Uterus (tissue), 4 donors: ENCODE measurements at regions of chr4 and their contacts with region 1.

Region 1: DNA sequence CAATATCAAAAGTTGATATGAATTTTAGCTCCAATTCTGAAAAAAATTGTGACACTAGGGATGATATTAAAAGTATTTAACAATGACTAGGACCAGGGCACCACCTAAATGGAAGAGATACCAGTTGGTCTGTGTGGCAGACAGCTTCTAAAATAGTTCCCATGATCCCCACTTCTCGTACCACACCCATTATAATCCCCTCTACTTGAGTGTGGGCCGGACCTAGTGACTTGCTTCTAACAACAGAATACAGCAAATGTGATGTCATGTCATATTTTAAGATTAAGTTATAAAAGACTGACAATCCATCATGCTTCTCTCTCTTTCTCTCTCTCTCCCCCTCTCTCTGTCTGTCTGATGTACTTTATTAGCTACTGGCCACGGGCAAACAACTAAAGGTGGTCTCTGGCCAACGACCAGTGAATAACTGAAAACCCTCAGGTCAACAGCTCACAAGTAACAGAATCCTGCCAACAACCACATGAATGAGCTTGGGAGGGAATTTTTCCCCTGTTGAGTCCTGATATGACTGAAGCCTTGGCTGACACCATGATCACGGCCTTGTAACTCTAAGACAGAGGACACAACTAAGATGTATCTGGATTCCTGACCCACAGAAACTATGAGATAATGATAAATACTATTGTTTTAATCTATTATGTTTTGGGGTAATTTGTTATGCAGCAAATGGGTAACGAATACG is 34.4 kb downstream of the FAM13A start:
- DNase-seq: no peak
- H3K4me3 ChIP-seq: no peak overlapping the region
- H3K27ac ChIP-seq: no peak overlapping the region
- H3K4me1 ChIP-seq: no peaks in the 10 kb centered on the region
- H3K27me3 ChIP-seq: no peaks in the 10 kb centered on the region
- CTCF ChIP-seq: no peak
- POLR2A ChIP-seq: no peak

Region 2: DNA sequence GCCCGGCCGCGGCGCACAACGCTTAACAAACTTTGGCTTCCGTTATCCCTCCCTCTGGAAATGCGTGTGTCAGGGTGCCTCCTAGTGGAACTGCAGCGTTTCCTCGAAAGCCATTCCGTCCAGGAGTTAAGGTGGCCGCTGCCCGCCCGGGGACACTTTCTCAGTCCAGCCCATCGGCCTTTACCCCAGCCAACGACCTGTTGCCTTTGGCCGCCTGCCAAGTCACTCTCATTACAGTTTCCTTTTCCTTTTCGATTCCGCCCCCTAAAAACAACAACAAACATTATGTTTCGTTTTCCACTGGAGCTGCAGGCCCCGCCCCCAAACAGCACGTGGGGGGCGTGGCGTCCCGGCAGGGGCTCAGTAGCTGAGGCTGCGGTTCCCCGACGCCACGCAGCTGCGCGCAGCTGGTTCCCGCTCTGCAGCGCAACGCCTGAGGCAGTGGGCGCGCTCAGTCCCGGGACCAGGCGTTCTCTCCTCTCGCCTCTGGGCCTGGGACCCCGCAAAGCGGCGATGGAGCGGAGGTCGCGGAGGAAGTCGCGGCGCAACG is 565.7 kb before region 1 on chr4 and contains the start of gene HERC5:
- intact Hi-C with region 1: no loop called
- DNase-seq: peak; percentile 90 to 93
- H3K4me3 ChIP-seq: peak within 1 kb of the TSS; percentile 52 to 79
- H3K27ac ChIP-seq: peak within 1 kb of the TSS; percentile 89 to 96
- H3K4me1 ChIP-seq: no peaks in the 10 kb centered on the region
- H3K27me3 ChIP-seq: no peaks in the 10 kb centered on the region
- CTCF ChIP-seq: peak; percentile 70 to 85 (median 79)
- POLR2A ChIP-seq: peak; percentile 80 to 81
- total RNA-seq, gene HERC5: 4.3 to 23.7 (median 10.6) TPM

Region 3: GRCh38 chr4:88659055-88659889 is 363.3 kb before region 1 on chr4:
- intact Hi-C with region 1: no loop called
- DNase-seq: peak; percentile 39 to 54
- H3K4me3 ChIP-seq: no peak overlapping the region
- H3K27ac ChIP-seq: peak overlapping the region; percentile 21 to 48
- H3K4me1 ChIP-seq: no peaks in the 10 kb centered on the region
- H3K27me3 ChIP-seq: no peaks in the 10 kb centered on the region
- CTCF ChIP-seq: peak; percentile 66 to 78 (median 70)
- POLR2A ChIP-seq: no peak

Region 4: DNA sequence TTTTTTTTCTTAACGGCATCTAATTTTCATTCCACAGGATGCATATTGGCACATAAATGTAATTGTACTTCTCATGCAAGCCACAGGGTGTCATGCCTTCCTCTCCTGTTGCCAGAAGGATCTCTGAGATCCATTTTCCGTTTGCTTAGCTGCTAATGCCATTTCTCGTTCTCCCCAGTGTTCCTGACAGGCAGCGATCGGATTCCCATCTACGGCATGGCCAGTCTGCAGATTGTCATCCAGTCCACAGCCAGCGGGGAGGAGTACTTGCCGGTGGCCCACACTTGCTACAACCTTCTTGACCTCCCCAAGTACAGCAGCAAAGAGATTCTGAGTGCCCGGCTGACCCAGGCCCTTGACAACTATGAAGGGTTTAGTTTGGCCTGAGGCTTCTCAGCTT is 316.0 kb before region 1 on chr4:
- intact Hi-C with region 1: loop called (anchors 2 kb)
- DNase-seq: peak; percentile 32 to 41
- H3K4me3 ChIP-seq: no peak overlapping the region
- H3K27ac ChIP-seq: peak overlapping the region; percentile 10 to 29
- H3K4me1 ChIP-seq: no peaks in the 10 kb centered on the region
- H3K27me3 ChIP-seq: no peaks in the 10 kb centered on the region
- CTCF ChIP-seq: peak; percentile 49 to 68 (median 56)
- POLR2A ChIP-seq: no peak

Region 5: DNA sequence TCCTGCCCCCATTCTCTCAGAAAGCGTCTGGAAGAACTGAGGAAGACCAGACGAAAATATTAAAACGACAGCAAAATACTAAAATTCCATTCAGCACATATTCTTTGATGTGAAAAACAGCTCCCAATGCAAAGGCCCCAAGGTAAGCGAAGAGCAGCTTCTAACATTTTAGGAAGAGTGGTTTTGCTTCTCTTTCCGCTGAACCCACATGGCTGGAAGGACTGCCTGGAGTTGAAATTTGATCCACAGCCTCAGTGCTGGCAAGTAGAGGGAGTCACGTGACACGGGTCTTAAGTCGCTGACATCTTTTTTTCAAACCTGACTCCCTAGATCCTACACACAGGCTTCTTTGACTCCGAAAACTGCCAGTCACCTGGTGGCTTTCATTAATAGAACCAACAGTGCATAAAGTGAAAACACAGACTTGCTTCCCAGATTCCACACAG is 34.4 kb after region 1 on chr4 and contains the start of gene FAM13A:
- intact Hi-C with region 1: no loop called
- DNase-seq: peak; percentile 80 to 92
- H3K4me3 ChIP-seq: peak within 1 kb of the TSS; percentile 43 to 44
- H3K27ac ChIP-seq: peak within 1 kb of the TSS; percentile 75 to 88
- H3K4me1 ChIP-seq: peaks cover 0 to 16% of the 10 kb centered on the region in 2 donors
- H3K27me3 ChIP-seq: no peaks in the 10 kb centered on the region
- CTCF ChIP-seq: peak in 1 of 4 experiments; percentile 3
- POLR2A ChIP-seq: peak in 1 of 2 donors; percentile 25
- total RNA-seq, gene FAM13A: 17.7 to 80.3 (median 46.2) TPM

Region 6: DNA sequence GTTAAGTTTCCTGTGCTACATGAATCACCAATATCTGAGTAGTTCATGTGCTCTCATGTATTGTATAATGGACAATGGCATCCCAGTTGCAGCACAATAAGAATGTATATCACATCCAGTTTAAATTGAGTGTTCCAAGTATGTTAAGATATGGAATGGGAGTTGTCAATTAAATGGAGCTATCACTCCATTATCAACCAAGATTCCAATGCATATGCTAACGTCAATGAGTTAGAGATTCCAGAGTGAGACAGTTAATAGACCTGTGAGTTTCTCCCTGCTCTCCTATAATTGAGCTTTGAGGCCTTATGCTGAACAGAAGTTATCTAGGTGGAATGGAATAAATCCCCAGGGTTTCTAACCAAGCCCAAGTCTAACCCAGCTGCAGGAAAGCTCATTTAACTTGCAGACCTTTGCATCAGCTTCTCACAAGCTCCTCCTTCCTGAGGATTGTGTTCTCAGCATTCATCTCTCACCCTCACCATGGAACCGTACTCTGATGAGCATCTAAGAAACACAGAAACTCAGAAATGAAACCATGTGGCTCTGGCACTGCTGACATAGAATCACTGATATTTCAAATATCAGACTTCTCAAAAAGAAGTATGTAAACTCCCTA is 173.6 kb after region 1 on chr4:
- intact Hi-C with region 1: no loop called
- DNase-seq: no peak
- H3K4me3 ChIP-seq: no peak overlapping the region
- H3K27ac ChIP-seq: no peak overlapping the region
- H3K4me1 ChIP-seq: no peaks in the 10 kb centered on the region
- H3K27me3 ChIP-seq: no peaks in the 10 kb centered on the region
- CTCF ChIP-seq: no peak
- POLR2A ChIP-seq: no peak